ENCODE measurements at regions of chr4 and their contacts with region 1.

Region 1: DNA sequence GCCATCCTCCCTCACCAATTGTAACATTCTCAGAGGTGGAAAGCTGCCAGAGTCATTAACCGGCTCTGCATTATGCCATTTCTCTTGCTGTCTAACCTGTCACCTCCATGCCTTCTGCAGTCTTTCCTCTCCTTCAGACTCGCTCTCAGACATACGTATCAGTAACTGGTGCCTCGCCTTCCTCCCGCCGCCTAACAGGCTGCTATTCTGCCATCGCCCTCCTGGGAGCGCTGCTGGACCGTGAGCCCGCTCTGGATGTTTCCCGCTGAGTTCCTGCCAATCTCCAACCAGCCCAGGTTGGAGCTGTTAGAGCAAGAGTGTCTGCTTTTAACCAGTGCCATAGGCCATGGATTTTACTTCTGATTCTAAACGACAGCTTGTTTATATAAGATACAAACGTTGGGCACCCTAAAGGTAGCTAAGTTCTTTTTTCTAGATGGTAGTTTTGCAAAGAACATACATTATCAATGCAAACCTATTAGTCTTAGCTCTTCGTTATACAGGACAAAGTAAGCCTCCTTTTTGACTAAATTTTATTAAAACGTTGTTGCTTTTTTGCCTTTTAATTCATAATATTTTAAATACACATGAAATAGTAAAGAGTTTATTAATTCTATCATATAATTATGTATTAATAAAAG is 59.5 kb upstream of the NEIL3 start:
- DNase-seq: peak; percentile 80
- H3K4me3 Mint-ChIP-seq: no peak overlapping the region
- H3K27ac Mint-ChIP-seq: no peak overlapping the region
- H3K4me1 Mint-ChIP-seq: peaks cover 11% of the 10 kb centered on the region
- H3K27me3 Mint-ChIP-seq: peaks cover 8% of the 10 kb centered on the region

Region 2: DNA sequence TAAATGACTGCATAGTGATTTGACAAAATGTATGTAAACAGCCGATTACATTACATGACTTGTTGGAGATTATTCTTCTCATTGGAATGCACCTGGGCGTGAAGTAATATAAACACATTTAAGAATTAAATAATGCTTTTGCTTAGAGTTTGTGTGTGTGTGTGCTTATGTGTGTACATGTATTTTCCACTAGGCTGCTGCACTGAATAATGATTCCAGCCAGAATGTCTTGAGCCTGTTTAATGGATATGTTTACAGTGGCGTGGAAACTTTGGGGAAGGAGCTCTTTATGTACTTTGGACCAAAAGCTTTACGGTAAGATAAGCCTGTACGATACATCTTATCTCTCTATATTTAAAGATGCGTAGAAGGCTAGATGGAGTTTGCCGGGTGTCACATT is 72.1 kb after region 1 on chr4:
- CTCF ChIA-PET with region 1: interaction called, 10 read pairs
- POLR2A ChIA-PET with region 1: no interaction called
- DNase-seq: no peak
- H3K4me3 Mint-ChIP-seq: no peak overlapping the region
- H3K27ac Mint-ChIP-seq: no peak overlapping the region
- H3K4me1 Mint-ChIP-seq: peaks cover 59% of the 10 kb centered on the region
- H3K27me3 Mint-ChIP-seq: no peaks in the 10 kb centered on the region

Region 3: GRCh38 chr4:177339477-177340374 is 89.5 kb after region 1 on chr4:
- CTCF ChIA-PET with region 1: interaction called, 79 read pairs
- POLR2A ChIA-PET with region 1: interaction called, 5 read pairs
- DNase-seq: no peak
- H3K4me3 Mint-ChIP-seq: no peak overlapping the region
- H3K27ac Mint-ChIP-seq: peak overlapping the region; percentile 47
- H3K4me1 Mint-ChIP-seq: peaks cover 12% of the 10 kb centered on the region
- H3K27me3 Mint-ChIP-seq: no peaks in the 10 kb centered on the region

Region 4: DNA sequence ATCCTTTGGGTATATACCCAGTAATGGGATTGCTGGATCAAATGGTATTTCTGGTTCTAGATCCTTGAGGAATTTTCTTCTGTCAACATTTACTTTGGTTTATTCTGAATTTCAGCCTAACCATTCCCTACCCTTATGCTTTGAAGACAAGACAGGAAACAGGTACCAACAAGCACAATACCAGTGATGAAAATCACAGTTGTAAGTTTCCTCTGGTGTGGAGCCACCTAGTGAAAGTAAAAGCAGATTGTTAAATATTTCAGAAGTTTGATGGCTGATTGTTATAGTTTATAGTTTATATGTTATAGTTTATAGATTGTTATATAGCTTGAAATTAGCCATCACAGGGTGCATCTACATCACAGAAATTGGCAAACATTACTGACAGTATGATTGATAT is 296.6 kb after region 1 on chr4:
- CTCF ChIA-PET with region 1: interaction called, 11 read pairs
- POLR2A ChIA-PET with region 1: no interaction called
- DNase-seq: no peak
- H3K4me3 Mint-ChIP-seq: no peak overlapping the region
- H3K27ac Mint-ChIP-seq: no peak overlapping the region
- H3K4me1 Mint-ChIP-seq: no peaks in the 10 kb centered on the region
- H3K27me3 Mint-ChIP-seq: no peaks in the 10 kb centered on the region

Region 5: GRCh38 chr4:177555007-177555574 is 304.9 kb after region 1 on chr4:
- CTCF ChIA-PET with region 1: interaction called, 10 read pairs
- POLR2A ChIA-PET with region 1: no interaction called
- DNase-seq: peak; percentile 22
- H3K4me3 Mint-ChIP-seq: no peak overlapping the region
- H3K27ac Mint-ChIP-seq: no peak overlapping the region
- H3K4me1 Mint-ChIP-seq: no peaks in the 10 kb centered on the region
- H3K27me3 Mint-ChIP-seq: no peaks in the 10 kb centered on the region

Region 6: DNA sequence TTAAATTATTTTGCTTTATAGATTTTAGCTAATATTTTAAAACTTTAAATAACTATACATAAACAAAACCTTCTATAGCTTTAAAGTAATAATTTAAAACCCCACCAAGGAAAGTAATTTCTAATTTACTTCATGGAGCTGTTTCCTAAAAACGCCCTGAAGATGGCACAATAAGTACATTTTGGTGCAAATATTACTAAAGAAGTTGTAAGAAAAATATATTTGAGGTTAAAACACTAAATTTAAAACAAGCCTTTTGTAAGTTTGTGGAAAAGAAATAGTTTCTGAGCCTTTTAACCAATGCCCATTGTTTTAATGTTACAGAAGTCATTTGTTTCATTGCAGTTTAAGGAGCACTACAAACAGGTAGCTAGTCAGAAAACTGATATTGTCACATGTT is 329.5 kb after region 1 on chr4:
- CTCF ChIA-PET with region 1: no interaction called
- POLR2A ChIA-PET with region 1: no interaction called
- DNase-seq: no peak
- H3K4me3 Mint-ChIP-seq: no peak overlapping the region
- H3K27ac Mint-ChIP-seq: no peak overlapping the region
- H3K4me1 Mint-ChIP-seq: no peaks in the 10 kb centered on the region
- H3K27me3 Mint-ChIP-seq: no peaks in the 10 kb centered on the region